Gastrocnemius medialis (tissue), 4 donors: ENCODE measurements at regions of chr10 and their contacts with region 1.

Region 1: GRCh38 chr10:3720228-3721019 is 64.6 kb downstream of the KLF6 start:
- DNase-seq: peak; percentile 84 to 91
- ATAC-seq: peak; percentile 96 to 97
- H3K4me3 ChIP-seq: no peak overlapping the region
- H3K27ac ChIP-seq: peak overlapping the region; percentile 59 to 86 (median 78)
- H3K4me1 ChIP-seq: peaks cover 5% of the 10 kb centered on the region in 2 donors
- H3K27me3 ChIP-seq: no peaks in the 10 kb centered on the region
- CTCF ChIP-seq: no peak
- POLR2A ChIP-seq: peak; percentile 27 to 57

Region 2: GRCh38 chr10:3749600-3749999 is 29.2 kb after region 1 on chr10:
- in situ Hi-C with region 1: no loop called
- intact Hi-C with region 1: loop called (anchors 1 kb)
- DNase-seq: peak; percentile 82 to 87
- ATAC-seq: peak; percentile 92 to 94
- H3K4me3 ChIP-seq: peak overlapping the region; percentile 13 to 60 (median 42)
- H3K27ac ChIP-seq: peak overlapping the region; percentile 73 to 93 (median 90)
- H3K4me1 ChIP-seq: peaks cover 34 to 41% of the 10 kb centered on the region in 2 donors
- H3K27me3 ChIP-seq: no peaks in the 10 kb centered on the region
- CTCF ChIP-seq: no peak
- POLR2A ChIP-seq: peak; percentile 88

Region 3: DNA sequence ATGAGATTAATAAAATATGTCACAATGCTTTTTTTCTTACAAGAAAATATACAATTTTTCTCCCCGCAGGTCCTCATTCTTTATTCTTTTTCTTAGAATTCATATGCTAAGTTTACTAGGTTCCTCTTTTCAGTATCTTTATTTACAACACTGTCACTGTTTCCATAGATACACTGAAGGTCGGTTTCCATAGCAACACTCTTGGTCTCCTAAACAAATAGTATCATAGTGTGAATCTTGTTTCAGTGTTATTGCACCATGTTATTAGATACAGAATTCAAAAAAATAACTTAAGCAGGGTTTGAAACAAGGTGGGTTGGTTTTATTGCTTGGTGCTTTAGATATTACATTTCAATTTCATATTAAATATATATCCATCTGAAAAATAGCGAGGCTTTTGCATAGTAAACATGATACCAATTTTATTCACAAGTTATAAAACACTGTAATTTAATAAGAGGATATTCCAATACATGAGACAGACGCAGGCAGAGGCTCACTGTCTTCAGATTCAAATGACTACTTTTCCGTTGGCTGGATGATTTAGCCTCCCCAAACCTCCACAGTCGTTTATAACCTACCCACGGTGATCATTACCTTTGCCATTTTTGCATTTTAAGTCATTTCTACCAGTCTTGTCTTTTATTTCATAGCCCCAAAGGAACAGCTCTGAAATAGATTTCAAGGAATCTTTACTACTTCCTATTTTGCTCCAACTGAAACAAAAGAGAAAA is 153.5 kb after region 1 on chr10:
- in situ Hi-C with region 1: no loop called
- intact Hi-C with region 1: no loop called
- DNase-seq: no peak
- ATAC-seq: no peak
- H3K4me3 ChIP-seq: no peak overlapping the region
- H3K27ac ChIP-seq: peak overlapping the region in 1 of 4 donors; percentile 12
- H3K4me1 ChIP-seq: peaks cover 11 to 15% of the 10 kb centered on the region in 2 donors
- H3K27me3 ChIP-seq: no peaks in the 10 kb centered on the region
- CTCF ChIP-seq: no peak
- POLR2A ChIP-seq: no peak

Region 4: GRCh38 chr10:4344511-4344994 is 624.1 kb after region 1 on chr10:
- in situ Hi-C with region 1: no loop called
- intact Hi-C with region 1: loop called (anchors 2 kb)
- DNase-seq: peak; percentile 68 to 77
- ATAC-seq: peak; percentile 97 to 98
- H3K4me3 ChIP-seq: no peak overlapping the region
- H3K27ac ChIP-seq: peak overlapping the region; percentile 60 to 89 (median 76)
- H3K4me1 ChIP-seq: peaks cover 19 to 23% of the 10 kb centered on the region in 2 donors
- H3K27me3 ChIP-seq: no peaks in the 10 kb centered on the region
- CTCF ChIP-seq: peak in 3 of 5 experiments; percentile 10 to 25 (median 13)
- POLR2A ChIP-seq: no peak